ENCODE measurements at regions of chr12 and their contacts with region 1.

Region 1: DNA sequence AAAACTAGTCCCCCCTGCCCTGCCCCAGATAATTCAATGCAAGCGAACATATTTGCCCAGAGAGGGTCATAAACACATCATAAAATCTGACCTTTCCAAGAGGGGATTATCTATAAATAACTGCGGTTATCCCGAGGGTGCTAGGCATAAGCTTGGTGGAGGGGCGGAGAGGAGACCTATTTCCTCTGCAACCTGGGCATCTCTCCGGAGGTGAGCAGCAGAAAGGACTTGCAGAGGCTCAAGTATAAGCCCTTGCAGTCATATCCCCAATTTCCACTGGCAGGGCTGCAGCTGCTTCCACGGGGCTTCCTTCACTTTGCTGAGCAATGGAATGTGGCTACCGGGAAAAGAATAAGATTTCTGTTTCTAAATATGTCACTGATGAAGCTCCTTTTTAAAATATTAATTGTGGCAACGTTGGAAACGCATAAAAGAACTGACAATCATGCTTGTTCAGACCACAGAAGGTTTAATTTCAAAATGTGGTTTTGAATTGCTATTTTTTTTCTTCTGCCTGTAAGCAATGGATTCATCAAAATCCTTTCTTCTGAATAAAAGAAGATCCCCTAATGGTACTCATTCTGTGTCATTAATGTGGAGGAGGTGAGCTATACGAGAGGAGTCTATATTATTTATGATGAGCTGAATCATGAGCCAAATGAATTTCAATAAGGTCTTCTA is 268.9 kb upstream of the ATP2B1 start:
- DNase-seq: no peak
- ATAC-seq: no peak
- H3K4me3 Mint-ChIP-seq: no peak overlapping the region
- H3K27ac Mint-ChIP-seq: no peak overlapping the region
- H3K4me1 Mint-ChIP-seq: peaks cover 6% of the 10 kb centered on the region
- H3K27me3 Mint-ChIP-seq: no peaks in the 10 kb centered on the region
- CTCF ChIP-seq: no peak

Region 2: GRCh38 chr12:89960011-89960507 is 17.5 kb before region 1 on chr12:
- CTCF ChIA-PET with region 1: no interaction called
- POLR2A ChIA-PET with region 1: no interaction called
- intact Hi-C with region 1: no loop called
- DNase-seq: no peak
- ATAC-seq: peak; percentile 92
- H3K4me3 Mint-ChIP-seq: peak overlapping the region; percentile 74
- H3K27ac Mint-ChIP-seq: peak overlapping the region; percentile 85
- H3K4me1 Mint-ChIP-seq: peaks cover 38% of the 10 kb centered on the region
- H3K27me3 Mint-ChIP-seq: no peaks in the 10 kb centered on the region
- CTCF ChIP-seq: no peak

Region 3: DNA sequence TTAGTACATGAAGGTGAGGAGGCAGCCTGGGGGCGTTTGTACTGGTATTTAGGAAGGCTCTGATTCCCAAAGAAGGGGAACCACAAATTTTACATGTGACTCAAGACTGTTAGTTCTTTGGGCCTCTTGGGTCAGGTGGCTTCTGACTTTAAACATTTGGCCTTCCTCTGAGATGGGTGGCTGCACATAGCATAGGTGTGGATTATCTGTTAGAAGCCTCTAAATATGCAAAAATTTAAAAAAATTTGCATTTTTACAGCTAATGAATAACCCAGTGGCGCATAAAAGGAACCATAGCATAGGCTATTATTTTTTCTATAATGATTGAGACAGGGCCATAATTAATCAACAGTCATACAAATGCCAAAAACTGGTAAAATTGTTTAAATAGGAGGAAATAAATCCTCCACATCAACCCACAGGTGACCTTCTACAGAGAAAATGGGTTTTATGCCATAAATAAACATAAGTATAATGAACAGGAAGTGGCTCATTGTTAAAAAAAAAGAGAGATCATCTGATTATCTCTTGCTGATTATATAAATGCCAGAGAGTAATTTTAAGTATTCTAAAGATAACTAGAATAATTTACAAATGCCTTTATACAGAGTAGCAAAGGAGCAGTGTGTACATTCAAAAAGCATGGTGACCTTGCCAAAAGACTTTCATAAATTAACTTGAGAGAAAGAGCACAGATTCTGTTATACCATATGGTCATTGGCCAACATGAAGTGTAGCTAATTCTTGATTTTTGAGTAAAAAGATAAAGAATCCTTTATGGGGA is 15.3 kb after region 1 on chr12:
- CTCF ChIA-PET with region 1: no interaction called
- POLR2A ChIA-PET with region 1: interaction called, 3 read pairs
- intact Hi-C with region 1: loop called (anchors 2 kb)
- DNase-seq: no peak
- ATAC-seq: no peak
- H3K4me3 Mint-ChIP-seq: no peak overlapping the region
- H3K27ac Mint-ChIP-seq: no peak overlapping the region
- H3K4me1 Mint-ChIP-seq: peaks cover 32% of the 10 kb centered on the region
- H3K27me3 Mint-ChIP-seq: no peaks in the 10 kb centered on the region
- CTCF ChIP-seq: no peak

Measured in activated B cell treated with CpG ODN at 0.5 μM for 24 hours (primary cell).